Panc1 (cell line): ENCODE measurements at regions of chr7 and their contacts with region 1.

Region 1: DNA sequence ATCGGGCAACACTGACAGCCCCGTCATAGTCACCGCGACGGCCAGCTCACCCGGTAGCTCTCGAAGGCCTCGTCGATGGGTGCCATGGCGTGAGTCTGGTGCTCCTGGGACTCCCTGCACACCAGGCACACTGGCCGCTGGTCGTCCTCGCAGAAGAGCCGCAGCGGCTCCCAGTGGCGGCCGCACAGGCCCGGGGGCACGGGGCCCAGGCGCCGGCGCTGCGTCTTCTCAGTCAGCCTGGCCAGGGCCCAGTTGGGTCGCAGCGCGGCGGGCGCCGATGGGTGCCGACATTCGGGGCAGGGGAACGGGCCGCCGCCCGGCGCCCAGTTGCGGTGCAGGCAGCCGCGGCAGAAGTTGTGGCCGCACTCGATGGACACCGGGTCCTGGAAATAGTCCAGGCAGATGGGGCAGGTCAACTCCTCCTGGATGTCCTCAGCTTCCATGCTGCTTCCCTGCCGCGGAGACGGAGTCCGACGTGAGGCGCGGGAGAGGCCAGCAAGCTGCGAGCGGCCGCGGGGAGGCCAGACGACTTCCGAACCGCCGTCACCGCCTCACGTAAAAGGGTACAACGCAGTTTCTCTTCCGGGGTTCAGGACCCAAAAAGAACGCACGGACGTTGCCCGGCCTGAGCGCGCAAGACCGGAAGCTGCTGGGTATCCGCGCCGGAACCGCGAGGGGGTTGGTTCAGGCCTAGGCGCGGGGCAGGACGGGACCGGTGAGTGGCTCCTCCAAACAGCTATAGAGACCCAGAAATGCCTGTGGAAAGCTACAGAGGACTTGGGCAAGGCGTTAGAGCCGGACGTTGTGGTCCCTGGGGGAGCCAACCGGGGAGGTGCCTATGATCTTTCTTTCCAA is at the start of gene TRIM4:
- DNase-seq: peak; percentile 82
- ATAC-seq: peak; percentile 100
- H3K4me3 ChIP-seq: peak within 1 kb of the TSS; percentile 85 to 95
- H3K27ac ChIP-seq: peak within 1 kb of the TSS; percentile 98
- H3K4me1 ChIP-seq: peaks cover 11% of the 10 kb centered on the region
- H3K27me3 ChIP-seq: no peaks in the 10 kb centered on the region
- CTCF ChIP-seq: peak; percentile 43
- total RNA-seq, gene TRIM4: 28.1 TPM

Region 2: GRCh38 chr7:100049441-100050311 is 130.5 kb after region 1 on chr7 and contains the start of gene ZSCAN21:
- CTCF ChIA-PET with region 1: interaction called, 8 read pairs
- POLR2A ChIA-PET with region 1: no interaction called
- in situ Hi-C with region 1: no loop called
- intact Hi-C with region 1: loop called (anchors 10 kb)
- DNase-seq: peak; percentile 69
- ATAC-seq: peak; percentile 98
- H3K4me3 ChIP-seq: peak within 1 kb of the TSS; percentile 92 to 99
- H3K27ac ChIP-seq: peak within 1 kb of the TSS; percentile 94
- H3K4me1 ChIP-seq: peaks cover 4% of the 10 kb centered on the region
- H3K27me3 ChIP-seq: no peaks in the 10 kb centered on the region
- CTCF ChIP-seq: peak; percentile 49; the same call in 1 of the 2 replicates
- total RNA-seq, gene ZSCAN21: 13.4 TPM

Region 3: DNA sequence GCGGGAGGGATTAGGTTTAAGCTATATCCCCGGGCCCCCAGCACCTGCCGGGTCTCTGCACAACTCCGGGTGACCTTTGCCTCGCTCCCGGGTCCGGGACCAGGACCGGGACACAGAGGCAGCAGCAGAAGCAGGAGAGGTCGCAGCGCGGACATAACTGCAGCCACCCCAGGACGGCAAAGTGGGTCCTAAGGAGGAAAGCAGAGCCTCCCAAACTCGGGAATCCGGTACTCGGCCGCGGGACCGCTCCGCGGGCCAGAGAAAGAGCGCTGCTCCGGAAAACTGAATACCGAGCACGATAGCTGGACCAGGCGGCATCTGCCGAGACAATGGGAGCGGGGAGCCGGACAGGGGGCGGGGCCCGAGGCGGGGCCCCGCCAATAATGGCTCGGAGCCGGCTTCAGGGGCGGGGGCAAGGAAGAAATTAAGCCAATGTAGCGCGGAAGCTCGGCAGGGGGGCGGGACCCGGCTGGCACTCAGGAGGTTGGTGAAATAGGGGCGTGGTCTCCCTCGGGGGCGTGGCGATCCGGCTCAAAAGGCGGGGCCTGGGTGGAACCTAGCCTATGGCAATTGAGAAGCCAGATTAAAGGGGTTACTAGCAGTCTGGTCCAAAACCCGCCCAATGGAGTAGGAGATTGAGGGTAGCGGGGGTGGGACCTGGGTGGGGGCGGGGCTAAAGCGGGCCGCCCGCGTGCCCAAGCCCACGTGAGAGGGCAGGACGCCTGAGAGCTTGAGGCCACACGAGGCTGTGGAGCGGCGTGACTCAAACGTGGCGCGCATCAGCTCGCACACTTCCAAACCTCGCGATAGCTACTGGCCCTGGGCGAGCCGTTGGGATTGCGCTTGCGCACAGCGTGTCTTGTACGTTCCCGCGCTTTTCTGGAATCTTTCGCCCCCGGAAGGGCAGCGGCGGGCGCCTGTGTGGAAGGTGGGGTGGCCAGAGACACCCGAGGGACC is 258.1 kb after region 1 on chr7 and contains the starts of genes GPC2 and STAG3:
- CTCF ChIA-PET with region 1: no interaction called
- POLR2A ChIA-PET with region 1: no interaction called
- in situ Hi-C with region 1: no loop called
- intact Hi-C with region 1: no loop called
- DNase-seq: peak; percentile 80
- ATAC-seq: peak; percentile 93
- H3K4me3 ChIP-seq: peak within 1 kb of the TSS; percentile 67 to 87
- H3K27ac ChIP-seq: peak within 1 kb of the TSS; percentile 77
- H3K4me1 ChIP-seq: 0 out of 2 replicates have a peak, but pooled peaks cover 3% of the 10 kb centered on the region
- H3K27me3 ChIP-seq: no peaks in the 10 kb centered on the region
- CTCF ChIP-seq: no peak
- total RNA-seq, gene GPC2: 7.9 TPM
- total RNA-seq, gene STAG3: 1.7 TPM